Natural killer cell (primary cell): ENCODE measurements at regions of chr16 and their contacts with region 1.

Region 1: GRCh38 chr16:89453501-89454321 is 36.6 kb downstream of the ANKRD11 start:
- DNase-seq: peak in 1 of 2 donors; percentile 50
- ATAC-seq: peak; percentile 54 to 63 (median 56)
- H3K4me3 ChIP-seq: no peak overlapping the region
- H3K4me3 Mint-ChIP-seq: peak overlapping the region; percentile 65
- H3K27ac ChIP-seq: no peak overlapping the region
- H3K27ac Mint-ChIP-seq: peak overlapping the region; percentile 43 to 82
- H3K4me1 ChIP-seq: peaks cover 66% of the 10 kb centered on the region
- H3K4me1 Mint-ChIP-seq: peaks cover 56 to 66% of the 10 kb centered on the region in 2 donors
- H3K27me3 ChIP-seq: no peaks in the 10 kb centered on the region
- H3K27me3 Mint-ChIP-seq: no peaks in the 10 kb centered on the region
- CTCF ChIP-seq: no peak

Region 2: DNA sequence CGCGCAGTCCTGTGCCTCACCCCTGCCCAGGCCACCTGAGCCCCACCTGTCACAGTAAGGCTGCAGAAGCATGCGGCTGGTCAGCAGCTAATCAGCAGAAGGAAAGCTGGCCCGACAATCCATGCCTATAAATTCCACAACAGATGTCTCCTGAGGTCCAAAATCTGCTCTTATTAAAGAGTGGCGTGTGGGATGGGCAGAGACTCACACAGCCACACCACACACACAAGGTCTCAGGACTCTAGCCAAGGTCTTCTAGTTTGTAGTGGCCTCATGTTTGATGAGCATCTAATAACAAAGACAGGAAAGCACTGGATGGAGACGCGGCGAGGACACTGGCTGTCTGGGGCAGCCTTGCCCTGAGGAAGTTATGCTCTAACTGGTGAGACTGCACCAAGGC is 19.2 kb before region 1 on chr16:
- intact Hi-C with region 1: loop called (anchors 2 kb)
- DNase-seq: no peak
- ATAC-seq: no peak
- H3K4me3 ChIP-seq: no peak overlapping the region
- H3K4me3 Mint-ChIP-seq: peak overlapping the region; percentile 45
- H3K27ac ChIP-seq: no peak overlapping the region
- H3K27ac Mint-ChIP-seq: no peak overlapping the region
- H3K4me1 ChIP-seq: peaks cover 71% of the 10 kb centered on the region
- H3K4me1 Mint-ChIP-seq: peaks cover 18 to 36% of the 10 kb centered on the region in 2 donors
- H3K27me3 ChIP-seq: no peaks in the 10 kb centered on the region
- H3K27me3 Mint-ChIP-seq: no peaks in the 10 kb centered on the region
- CTCF ChIP-seq: no peak

Region 3: GRCh38 chr16:89484923-89485679 is 31.4 kb after region 1 on chr16:
- intact Hi-C with region 1: loop called (anchors 2 kb)
- DNase-seq: peak in 1 of 2 donors; percentile 64
- ATAC-seq: peak in 2 of 3 donors; percentile 10 to 12
- H3K4me3 ChIP-seq: no peak overlapping the region
- H3K4me3 Mint-ChIP-seq: peak overlapping the region; percentile 90
- H3K27ac ChIP-seq: peak overlapping the region; percentile 19
- H3K27ac Mint-ChIP-seq: peak overlapping the region; percentile 84 to 90
- H3K4me1 ChIP-seq: peaks cover 74% of the 10 kb centered on the region
- H3K4me1 Mint-ChIP-seq: peaks cover 81 to 87% of the 10 kb centered on the region in 2 donors
- H3K27me3 ChIP-seq: no peaks in the 10 kb centered on the region
- H3K27me3 Mint-ChIP-seq: no peaks in the 10 kb centered on the region
- CTCF ChIP-seq: no peak